ENCODE measurements at regions of chr9 and their contacts with region 1.

Region 1: GRCh38 chr9:94783102-94783664 is 56.7 kb downstream of the AOPEP start:
- DNase-seq: peak; percentile 96
- H3K4me3 ChIP-seq: no peak overlapping the region
- H3K27ac ChIP-seq: peak overlapping the region in 3 of 4 donors; percentile 21 to 69 (median 51)
- H3K4me1 ChIP-seq: peaks cover 0 to 10% (median 6%) of the 10 kb centered on the region in 4 donors
- H3K27me3 ChIP-seq: no peaks in the 10 kb centered on the region
- CTCF ChIP-seq: peak; percentile 50 to 63 (median 58)
- EP300 ChIP-seq: peak in 2 of 4 donors; percentile 4 to 54
- POLR2A ChIP-seq: no peak

Region 2: GRCh38 chr9:95025213-95026147 is 242.3 kb after region 1 on chr9:
- intact Hi-C with region 1: loop called (anchors 5 kb)
- DNase-seq: peak; percentile 87
- H3K4me3 ChIP-seq: no peak overlapping the region
- H3K27ac ChIP-seq: peak overlapping the region; percentile 72 to 99 (median 89)
- H3K4me1 ChIP-seq: peaks cover 0 to 100% (median 94%) of the 10 kb centered on the region in 4 donors
- H3K27me3 ChIP-seq: no peaks in the 10 kb centered on the region
- CTCF ChIP-seq: peak in 2 of 4 experiments; percentile 29 to 33
- EP300 ChIP-seq: peak in 2 of 4 donors; percentile 68 to 75
- POLR2A ChIP-seq: no peak

Region 3: DNA sequence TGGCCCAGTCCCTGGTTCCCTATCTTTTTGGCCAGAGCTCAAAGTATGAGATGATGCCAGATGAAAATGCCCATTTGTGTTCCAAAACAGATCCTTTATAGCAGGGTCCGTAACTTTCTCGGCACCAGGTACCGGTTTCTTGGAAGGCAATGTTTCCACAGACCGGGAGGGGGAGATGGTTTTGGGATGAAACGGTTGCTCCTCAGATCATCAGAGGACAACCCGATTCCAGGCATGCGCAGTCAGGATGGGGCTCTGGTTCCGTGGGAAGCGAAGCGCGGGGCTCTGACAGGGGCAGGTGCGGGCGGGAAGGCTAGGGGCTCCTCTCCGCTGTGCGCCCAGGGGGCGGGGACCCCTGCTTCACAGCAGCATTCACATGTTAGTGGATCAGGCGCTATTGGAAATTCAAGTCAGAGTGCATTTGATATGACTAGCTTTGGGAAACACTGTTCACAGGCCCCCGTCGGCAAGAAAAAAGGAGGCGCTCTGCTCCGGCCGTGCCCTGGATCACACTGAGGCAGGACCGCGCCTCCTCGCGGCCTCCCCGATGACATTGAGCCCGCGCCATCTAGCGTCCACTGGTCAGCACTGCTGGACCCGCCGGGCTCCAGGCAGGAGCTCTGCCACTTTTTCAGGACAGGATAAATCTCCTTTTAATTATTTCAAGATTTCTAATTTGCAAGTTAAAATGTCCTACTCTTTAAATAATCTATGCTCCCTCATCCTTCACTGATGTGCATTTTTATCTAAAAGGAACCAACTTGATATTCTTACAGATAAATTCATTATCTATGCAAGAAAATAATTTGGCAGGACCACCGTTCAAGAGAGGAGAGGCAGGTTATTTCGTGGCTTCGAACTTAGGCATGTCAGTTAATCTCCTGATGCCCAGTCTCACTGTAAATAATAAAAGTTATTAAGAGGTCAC is 344.3 kb after region 1 on chr9:
- intact Hi-C with region 1: loop called (anchors 1 kb)
- DNase-seq: peak; percentile 94
- H3K4me3 ChIP-seq: peak overlapping the region; percentile 14 to 48 (median 34)
- H3K27ac ChIP-seq: peak overlapping the region in 3 of 4 donors; percentile 3 to 62 (median 5)
- H3K4me1 ChIP-seq: peaks cover 0 to 28% (median 10%) of the 10 kb centered on the region in 4 donors
- H3K27me3 ChIP-seq: no peaks in the 10 kb centered on the region
- CTCF ChIP-seq: peak; percentile 91 to 98 (median 96)
- EP300 ChIP-seq: no peak
- POLR2A ChIP-seq: no peak